ENCODE measurements at regions of chr2 and their contacts with region 1.

Region 1: GRCh38 chr2:70948337-70949003 is 12.8 kb downstream of the ATP6V1B1 start:
- DNase-seq: peak; percentile 50
- H3K4me3 ChIP-seq: peak overlapping the region in 2 of 3 experiments; percentile 20 to 22
- H3K27ac ChIP-seq: no peak overlapping the region
- H3K4me1 ChIP-seq: peaks cover 3% of the 10 kb centered on the region
- H3K27me3 ChIP-seq: peaks cover 2% of the 10 kb centered on the region
- CTCF ChIP-seq: peak; percentile 71 to 89

Region 2: GRCh38 chr2:70656421-70657010 is 292.0 kb before region 1 on chr2:
- CTCF ChIA-PET with region 1: no interaction called
- dilution Hi-C with region 1: no loop called
- in situ Hi-C with region 1: loop called in 1 of 2 experiments (anchors 10 kb)
- intact Hi-C with region 1: loop called (anchors 1 kb)
- DNase-seq: no peak
- H3K4me3 ChIP-seq: no peak overlapping the region
- H3K27ac ChIP-seq: no peak overlapping the region
- H3K4me1 ChIP-seq: no peaks in the 10 kb centered on the region
- H3K27me3 ChIP-seq: peaks cover 4% of the 10 kb centered on the region
- CTCF ChIP-seq: no peak

Region 3: DNA sequence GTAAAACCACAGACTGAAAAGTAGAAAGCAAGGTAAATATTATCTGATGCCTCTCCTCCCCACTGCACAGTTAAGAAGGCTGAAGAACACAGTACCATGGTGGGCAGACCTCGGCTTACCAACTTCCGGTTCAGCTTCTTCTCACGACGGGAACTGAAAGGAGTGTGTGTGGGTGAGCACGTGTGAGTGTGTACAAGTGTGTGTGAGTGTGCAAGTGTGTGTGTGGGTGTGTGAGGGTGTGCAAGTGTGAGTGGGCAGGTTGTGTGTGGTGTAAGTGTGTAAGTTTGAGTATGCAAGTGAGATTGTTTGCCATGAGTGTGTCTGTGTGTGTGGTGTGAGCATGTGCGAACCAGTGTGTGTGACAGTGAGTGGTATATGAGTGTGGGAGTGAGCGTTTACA is 283.9 kb before region 1 on chr2:
- CTCF ChIA-PET with region 1: no interaction called
- dilution Hi-C with region 1: no loop called
- in situ Hi-C with region 1: loop called in 1 of 2 experiments (anchors 10 kb)
- intact Hi-C with region 1: no loop called
- DNase-seq: no peak
- H3K4me3 ChIP-seq: no peak overlapping the region
- H3K27ac ChIP-seq: no peak overlapping the region
- H3K4me1 ChIP-seq: no peaks in the 10 kb centered on the region
- H3K27me3 ChIP-seq: peaks cover 4% of the 10 kb centered on the region
- CTCF ChIP-seq: no peak

Region 4: DNA sequence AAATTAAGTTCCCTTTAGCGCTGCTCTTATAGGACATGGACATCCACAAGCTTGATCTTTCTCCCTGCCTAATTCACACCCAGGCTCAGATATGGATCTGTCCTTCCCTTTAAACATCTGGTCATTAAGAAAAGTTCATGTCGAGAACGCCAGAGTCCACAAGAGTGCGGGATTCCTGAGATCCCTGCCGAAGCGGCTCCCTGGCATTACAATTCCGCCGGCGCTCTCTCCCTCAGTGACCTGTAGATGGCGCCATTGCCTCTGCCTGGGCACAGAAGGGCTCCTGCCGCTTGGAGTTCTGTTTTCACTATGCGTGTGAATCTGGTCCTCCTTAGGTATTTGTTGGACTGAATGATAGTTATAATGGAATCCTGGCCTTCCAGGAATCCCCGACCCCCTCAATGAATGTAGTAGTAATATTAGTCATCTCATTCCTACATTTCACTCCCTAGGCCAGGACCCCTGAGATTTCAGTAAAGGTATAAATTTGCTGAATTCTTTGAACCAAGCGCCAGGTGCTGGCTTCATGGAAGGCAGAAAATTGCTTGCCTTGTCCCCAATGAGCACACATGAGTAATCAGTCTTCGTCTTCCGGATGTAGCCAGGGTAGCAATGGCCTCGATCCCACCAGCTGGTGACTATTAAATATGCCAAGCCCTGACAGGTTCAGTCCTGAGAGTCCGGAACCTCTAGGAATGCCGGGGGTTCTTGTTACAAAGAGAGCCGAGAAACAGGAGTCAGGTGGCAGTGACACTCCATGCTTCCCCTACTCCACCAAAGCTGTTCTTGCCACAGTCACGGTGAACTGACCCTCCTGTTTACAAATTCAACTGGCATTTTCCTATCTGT is 86.5 kb before region 1 on chr2:
- CTCF ChIA-PET with region 1: no interaction called
- dilution Hi-C with region 1: no loop called
- in situ Hi-C with region 1: loop called in 1 of 2 experiments (anchors 5 kb)
- intact Hi-C with region 1: loop called (anchors 2 kb)
- DNase-seq: peak; percentile 54
- H3K4me3 ChIP-seq: no peak overlapping the region
- H3K27ac ChIP-seq: no peak overlapping the region
- H3K4me1 ChIP-seq: no peaks in the 10 kb centered on the region
- H3K27me3 ChIP-seq: peaks cover 8% of the 10 kb centered on the region
- CTCF ChIP-seq: peak; percentile 95 to 98

Region 5: GRCh38 chr2:70871398-70872211 is 76.9 kb before region 1 on chr2:
- CTCF ChIA-PET with region 1: interaction called, 4 read pairs
- dilution Hi-C with region 1: loop called (anchors 5 kb)
- in situ Hi-C with region 1: loop called in 1 of 2 experiments (anchors 5 kb)
- intact Hi-C with region 1: loop called (anchors 1 kb)
- DNase-seq: peak; percentile 55
- H3K4me3 ChIP-seq: peak overlapping the region in 1 of 3 experiments; percentile 24
- H3K27ac ChIP-seq: no peak overlapping the region
- H3K4me1 ChIP-seq: peaks cover 10% of the 10 kb centered on the region
- H3K27me3 ChIP-seq: no peaks in the 10 kb centered on the region
- CTCF ChIP-seq: peak; percentile 74 to 92

Region 6: DNA sequence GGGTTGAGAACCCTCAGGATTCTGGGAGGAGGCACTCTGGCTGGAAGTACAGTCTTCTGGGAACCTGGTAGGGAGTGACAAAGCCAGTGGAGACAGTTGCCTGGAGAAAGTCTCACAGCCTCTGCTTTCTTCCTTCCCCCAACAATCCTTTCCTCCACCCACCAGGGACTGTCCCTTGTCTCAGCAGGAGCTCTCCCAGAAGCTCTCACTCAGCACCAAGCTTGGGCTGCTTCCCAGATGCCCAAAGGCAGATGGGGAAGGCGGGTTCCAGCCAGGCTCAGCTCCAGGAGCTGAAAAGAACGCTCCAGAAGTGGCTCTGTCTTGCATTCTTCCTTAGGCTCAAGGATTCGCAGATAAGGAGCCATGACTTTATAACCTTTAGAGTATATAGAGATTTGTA is 112.4 kb after region 1 on chr2:
- CTCF ChIA-PET with region 1: no interaction called
- dilution Hi-C with region 1: no loop called
- in situ Hi-C with region 1: no loop called
- intact Hi-C with region 1: no loop called
- DNase-seq: no peak
- H3K4me3 ChIP-seq: no peak overlapping the region
- H3K27ac ChIP-seq: no peak overlapping the region
- H3K4me1 ChIP-seq: peaks cover 13% of the 10 kb centered on the region
- H3K27me3 ChIP-seq: no peaks in the 10 kb centered on the region
- CTCF ChIP-seq: no peak

Region 7: GRCh38 chr2:71685078-71685848 is 736.8 kb after region 1 on chr2:
- CTCF ChIA-PET with region 1: no interaction called
- dilution Hi-C with region 1: no loop called
- in situ Hi-C with region 1: no loop called
- intact Hi-C with region 1: no loop called
- DNase-seq: no peak
- H3K4me3 ChIP-seq: no peak overlapping the region
- H3K27ac ChIP-seq: no peak overlapping the region
- H3K4me1 ChIP-seq: no peaks in the 10 kb centered on the region
- H3K27me3 ChIP-seq: no peaks in the 10 kb centered on the region
- CTCF ChIP-seq: no peak